Panc1 (cell line): ENCODE measurements at regions of chr1 and their contacts with region 1.

Region 1: DNA sequence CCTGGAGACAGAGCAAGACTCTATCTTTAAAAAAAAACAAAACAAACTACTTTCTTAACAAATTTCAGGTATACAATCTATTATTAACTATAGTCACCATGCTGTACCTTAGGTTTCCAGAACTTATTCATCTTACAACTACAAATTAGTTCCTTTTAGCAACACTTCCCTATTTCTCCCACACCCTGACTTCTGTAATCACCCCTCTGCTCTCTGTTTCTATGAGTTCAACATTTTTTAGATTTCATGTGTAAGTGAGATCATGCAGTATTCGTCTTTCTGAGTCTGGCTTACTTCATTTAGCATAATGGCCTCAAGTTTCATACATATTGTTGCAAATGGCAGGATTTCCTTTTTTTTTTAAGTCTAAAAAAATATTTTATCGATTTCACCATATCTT is 77.9 kb upstream of the LPGAT1 start:
- DNase-seq: no peak
- ATAC-seq: no peak
- H3K4me3 ChIP-seq: no peak overlapping the region
- H3K27ac ChIP-seq: no peak overlapping the region
- H3K4me1 ChIP-seq: no peaks in the 10 kb centered on the region
- H3K27me3 ChIP-seq: no peaks in the 10 kb centered on the region
- CTCF ChIP-seq: no peak

Region 2: GRCh38 chr1:211788626-211789025 is 119.8 kb before region 1 on chr1:
- CTCF ChIA-PET with region 1: no interaction called
- POLR2A ChIA-PET with region 1: no interaction called
- in situ Hi-C with region 1: no loop called
- intact Hi-C with region 1: no loop called
- DNase-seq: no peak
- ATAC-seq: no peak
- H3K4me3 ChIP-seq: no peak overlapping the region
- H3K27ac ChIP-seq: no peak overlapping the region
- H3K4me1 ChIP-seq: no peaks in the 10 kb centered on the region
- H3K27me3 ChIP-seq: no peaks in the 10 kb centered on the region
- CTCF ChIP-seq: no peak

Region 3: DNA sequence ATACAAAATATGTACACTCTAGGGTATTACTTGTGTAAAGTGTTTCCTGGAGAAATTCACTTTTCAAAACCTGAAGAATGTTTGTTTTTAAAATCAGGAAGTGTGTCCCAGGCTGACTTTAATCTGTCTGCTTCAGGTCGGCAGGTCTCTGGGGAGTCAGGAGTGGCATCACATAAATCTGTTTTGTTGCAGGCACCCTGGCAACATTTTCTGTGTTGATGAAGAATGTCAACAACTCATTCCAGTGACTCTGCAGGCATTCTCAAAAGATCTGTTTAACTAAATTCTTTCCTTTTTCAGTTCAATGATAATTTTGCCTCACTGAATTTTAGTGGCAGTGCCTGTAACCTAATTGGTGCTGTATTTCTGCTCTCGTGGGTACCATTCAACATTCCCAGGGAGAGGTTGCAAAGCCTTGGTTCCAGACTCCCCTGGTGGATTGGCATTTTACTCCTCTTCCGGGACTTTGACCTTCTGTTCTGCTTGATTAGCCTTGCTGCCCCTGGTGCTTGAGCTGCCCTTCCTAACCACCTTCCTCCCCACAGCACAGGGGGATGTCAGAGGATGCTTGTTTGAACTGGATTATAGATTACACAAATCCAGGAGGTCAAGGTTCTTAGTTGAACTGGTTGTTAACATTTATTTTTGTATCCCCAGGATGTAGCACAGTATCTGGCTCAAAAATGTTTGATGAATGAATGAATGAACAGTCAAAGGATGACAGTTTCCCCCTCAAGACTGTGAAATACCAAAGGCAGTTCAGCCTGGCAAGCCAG is 22.5 kb before region 1 on chr1:
- CTCF ChIA-PET with region 1: interaction called, 17 read pairs
- POLR2A ChIA-PET with region 1: no interaction called
- in situ Hi-C with region 1: no loop called
- intact Hi-C with region 1: no loop called
- DNase-seq: no peak
- ATAC-seq: no peak
- H3K4me3 ChIP-seq: no peak overlapping the region
- H3K27ac ChIP-seq: no peak overlapping the region
- H3K4me1 ChIP-seq: no peaks in the 10 kb centered on the region
- H3K27me3 ChIP-seq: no peaks in the 10 kb centered on the region
- CTCF ChIP-seq: no peak

Region 4: DNA sequence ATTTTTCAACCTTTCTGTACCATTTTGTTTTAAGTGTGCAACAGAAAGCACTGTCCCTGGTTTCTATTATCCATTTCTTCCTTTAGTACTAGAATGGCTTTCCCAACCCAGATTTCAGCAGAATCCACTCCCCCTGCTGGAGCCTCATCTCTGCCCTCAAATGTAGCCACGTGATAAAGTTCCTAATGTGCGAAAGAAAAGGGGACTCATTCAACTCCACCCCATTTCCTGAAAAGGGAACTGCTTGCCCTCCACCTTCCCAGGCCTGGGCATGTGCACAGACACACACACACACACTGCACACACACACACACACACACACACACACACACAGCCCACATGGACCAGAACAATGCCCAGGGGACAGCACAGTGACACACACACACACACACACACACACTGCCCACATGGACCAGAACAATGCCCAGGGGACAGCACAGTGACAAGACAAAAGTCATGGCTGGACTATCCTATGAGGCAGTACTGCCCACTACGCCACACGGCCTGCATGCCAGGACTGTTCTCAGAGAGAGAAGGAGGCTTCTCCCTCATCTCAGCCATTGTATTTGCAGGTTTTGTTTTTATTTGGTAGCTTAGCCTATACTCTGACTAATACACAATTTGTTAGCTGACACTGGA is 473.1 kb after region 1 on chr1:
- CTCF ChIA-PET with region 1: no interaction called
- POLR2A ChIA-PET with region 1: interaction called, 11 read pairs
- in situ Hi-C with region 1: no loop called
- intact Hi-C with region 1: no loop called
- DNase-seq: no peak
- ATAC-seq: no peak
- H3K4me3 ChIP-seq: no peak overlapping the region
- H3K27ac ChIP-seq: no peak overlapping the region
- H3K4me1 ChIP-seq: no peaks in the 10 kb centered on the region
- H3K27me3 ChIP-seq: no peaks in the 10 kb centered on the region
- CTCF ChIP-seq: no peak